ENCODE measurements at regions of chr7 and their contacts with region 1.

Region 1: DNA sequence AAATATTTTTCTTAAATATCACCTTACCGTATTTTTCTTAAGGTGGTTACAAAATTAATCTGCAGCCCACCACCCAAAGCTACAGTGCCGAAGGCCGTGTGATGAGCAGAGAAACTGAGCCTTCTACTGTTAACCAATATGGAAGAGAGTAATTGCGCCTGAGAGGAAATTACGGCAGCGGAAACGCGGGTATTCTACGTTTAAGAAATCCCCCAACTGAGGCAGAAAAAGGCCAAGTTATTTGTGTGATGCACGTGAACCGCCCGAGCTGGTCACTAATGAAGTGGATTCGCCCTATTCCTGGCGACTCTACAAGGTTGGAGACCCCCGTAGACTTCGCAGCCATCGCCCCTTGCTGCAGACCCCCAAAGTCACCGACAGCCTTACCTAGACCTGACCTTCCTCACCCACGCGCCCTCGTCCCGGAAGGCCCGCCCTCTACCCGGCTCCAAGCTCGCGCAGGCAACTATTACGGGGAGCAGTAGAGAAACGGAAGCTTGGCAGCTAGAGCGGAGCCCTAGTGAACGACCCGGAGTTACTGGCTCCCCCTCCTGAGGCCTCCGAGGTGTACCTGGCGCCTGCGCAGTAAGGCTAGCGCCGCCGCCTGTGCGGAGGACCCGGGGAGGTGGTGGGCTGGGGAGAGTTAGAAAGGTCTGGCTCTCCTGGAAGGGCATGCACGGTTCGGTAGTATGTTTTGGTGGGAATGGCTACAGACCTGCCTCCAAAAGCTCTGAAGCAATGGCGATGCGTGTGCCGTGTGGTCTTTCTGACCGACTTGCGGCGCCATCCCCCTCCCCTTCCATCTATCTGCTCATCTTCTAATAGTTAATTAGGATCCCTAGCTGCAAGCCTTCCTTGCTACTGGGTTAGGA is at the start of gene MRPS33:
- DNase-seq: peak; percentile 90 to 98 (median 94)
- ATAC-seq: peak; percentile 95
- H3K4me3 ChIP-seq: peak within 1 kb of the TSS; percentile 73
- H3K4me3 Mint-ChIP-seq: peak within 1 kb of the TSS; percentile 93
- H3K27ac ChIP-seq: peak within 1 kb of the TSS; percentile 100
- H3K27ac Mint-ChIP-seq: peak within 1 kb of the TSS; percentile 100
- H3K4me1 ChIP-seq: peaks cover 18% of the 10 kb centered on the region
- H3K4me1 Mint-ChIP-seq: peaks cover 44% of the 10 kb centered on the region
- H3K27me3 ChIP-seq: peaks cover 0 to 2% of the 10 kb centered on the region in 2 experiments
- H3K27me3 Mint-ChIP-seq: peaks cover 13% of the 10 kb centered on the region
- CTCF ChIP-seq: peak; percentile 61
- total RNA-seq, gene MRPS33: 21.7 to 24.3 TPM

Region 2: DNA sequence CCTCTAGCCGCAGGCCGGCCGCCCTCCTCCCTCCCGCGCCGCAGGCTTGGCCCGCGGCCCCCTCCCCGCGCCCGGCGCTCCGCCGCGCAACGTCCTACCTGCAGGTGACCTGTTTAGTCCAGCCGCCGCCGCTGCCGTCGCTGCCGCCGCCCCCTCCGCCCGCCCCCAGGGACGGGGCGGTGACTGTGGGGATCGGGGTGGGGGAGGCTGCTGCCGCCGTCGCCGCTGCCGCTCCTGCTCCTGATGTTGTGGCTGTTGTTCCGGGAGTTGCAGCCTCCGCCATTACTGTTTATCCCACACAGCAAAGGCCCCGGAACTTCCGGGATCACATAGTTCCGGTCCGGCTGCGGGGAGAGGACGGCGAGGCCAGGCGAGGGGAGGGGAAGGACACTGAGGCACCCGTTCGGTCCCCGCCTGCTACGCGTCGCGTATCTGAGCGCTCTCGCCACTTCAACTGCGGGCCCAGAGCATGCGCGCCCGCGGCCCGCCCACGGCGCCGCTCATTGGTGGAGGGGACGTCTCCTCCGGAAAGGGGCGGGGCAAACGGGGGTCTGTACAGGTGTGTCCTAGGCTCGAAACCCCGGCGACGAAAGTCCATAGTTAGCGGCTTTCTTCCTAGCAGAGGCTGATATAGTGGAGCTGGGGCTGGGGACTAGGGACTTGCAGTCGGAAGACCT is 535.6 kb before region 1 on chr7 and contains the start of gene MKRN1:
- CTCF ChIA-PET with region 1: interaction called, 3 read pairs
- POLR2A ChIA-PET with region 1: interaction called, 33 read pairs
- intact Hi-C with region 1: loop called (anchors 1 to 5 kb)
- DNase-seq: peak; percentile 86 to 96 (median 92)
- ATAC-seq: peak; percentile 86
- H3K4me3 ChIP-seq: peak within 1 kb of the TSS; percentile 91
- H3K4me3 Mint-ChIP-seq: peak within 1 kb of the TSS; percentile 100
- H3K27ac ChIP-seq: peak within 1 kb of the TSS; percentile 73 to 74
- H3K27ac Mint-ChIP-seq: peak within 1 kb of the TSS; percentile 85
- H3K4me1 ChIP-seq: peaks cover 29% of the 10 kb centered on the region
- H3K4me1 Mint-ChIP-seq: peaks cover 29% of the 10 kb centered on the region
- H3K27me3 ChIP-seq: no peaks in the 10 kb centered on the region
- H3K27me3 Mint-ChIP-seq: no peaks in the 10 kb centered on the region
- CTCF ChIP-seq: no peak
- total RNA-seq, gene MKRN1: 115 to 129 TPM

Region 3: DNA sequence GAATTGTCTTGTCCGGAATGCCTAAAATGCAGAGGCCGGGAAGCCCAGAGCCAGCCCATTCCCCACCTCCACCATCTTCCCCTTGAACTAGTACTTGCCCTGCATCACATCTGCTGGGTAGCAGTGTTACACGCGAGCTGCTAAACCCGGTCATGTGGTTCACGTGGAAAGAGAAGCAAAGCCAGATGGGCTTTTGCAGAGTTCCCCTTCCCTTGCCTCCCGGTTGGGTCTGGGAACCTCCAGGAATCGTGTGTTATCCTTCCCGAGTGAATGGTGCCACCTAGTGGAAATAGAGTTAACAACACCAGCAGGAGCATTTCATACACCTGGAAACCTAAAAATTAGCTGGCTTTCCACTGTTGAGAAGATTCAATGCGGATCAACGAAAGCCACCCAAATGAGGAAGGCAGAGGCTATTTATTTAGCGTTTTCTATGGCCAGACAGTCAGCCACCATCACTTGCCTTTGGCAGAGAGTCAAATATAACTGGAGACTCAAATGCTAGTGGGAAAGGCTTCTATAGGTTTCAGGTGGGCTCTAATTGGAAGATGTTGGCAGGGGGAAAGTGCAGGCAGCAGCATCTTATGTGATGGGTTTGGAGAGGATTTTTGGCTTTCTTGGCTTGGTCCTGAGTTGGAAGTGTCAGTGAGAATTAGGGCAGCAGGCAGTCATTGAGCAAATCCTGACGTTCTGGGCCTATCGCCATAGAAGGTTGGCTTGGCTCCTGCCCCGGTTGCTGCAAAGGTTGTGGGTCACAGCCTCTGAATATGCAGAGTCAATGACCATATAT is 361.2 kb before region 1 on chr7:
- CTCF ChIA-PET with region 1: interaction called, 3 read pairs
- POLR2A ChIA-PET with region 1: no interaction called
- intact Hi-C with region 1: loop called in 1 of 2 experiments (anchors 10 kb)
- DNase-seq: peak in 6 of 14 experiments; percentile 15 to 69 (median 47)
- ATAC-seq: no peak
- H3K4me3 ChIP-seq: no peak overlapping the region
- H3K4me3 Mint-ChIP-seq: no peak overlapping the region
- H3K27ac ChIP-seq: no peak overlapping the region
- H3K27ac Mint-ChIP-seq: no peak overlapping the region
- H3K4me1 ChIP-seq: peaks cover 20% of the 10 kb centered on the region
- H3K4me1 Mint-ChIP-seq: peaks cover 18% of the 10 kb centered on the region
- H3K27me3 ChIP-seq: no peaks in the 10 kb centered on the region
- H3K27me3 Mint-ChIP-seq: peaks cover 42% of the 10 kb centered on the region
- CTCF ChIP-seq: peak; percentile 95

Region 4: DNA sequence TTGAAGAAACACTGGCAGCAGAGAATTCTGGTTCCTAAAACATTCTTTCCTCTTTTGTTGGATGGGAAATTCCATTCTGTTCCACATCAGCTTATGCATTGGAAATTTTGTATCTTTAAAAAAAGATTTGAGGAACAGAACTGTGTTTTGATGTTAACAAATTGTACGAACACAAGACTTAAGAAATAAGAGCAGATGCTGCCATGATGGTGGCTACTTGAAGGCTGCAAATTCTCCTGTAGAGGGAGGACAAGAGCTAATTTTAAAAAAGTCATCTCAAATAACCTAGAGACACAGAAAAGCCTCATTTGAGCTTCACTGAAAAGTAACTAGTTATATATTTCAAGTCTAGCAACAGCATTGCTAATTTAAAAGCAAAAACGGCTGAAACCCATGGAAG is 288.5 kb before region 1 on chr7:
- CTCF ChIA-PET with region 1: no interaction called
- POLR2A ChIA-PET with region 1: interaction called, 16 read pairs
- intact Hi-C with region 1: loop called in 1 of 2 experiments (anchors 5 kb)
- DNase-seq: peak in 3 of 14 experiments; percentile 16 to 20 (median 16)
- ATAC-seq: no peak
- H3K4me3 ChIP-seq: no peak overlapping the region
- H3K4me3 Mint-ChIP-seq: no peak overlapping the region
- H3K27ac ChIP-seq: no peak overlapping the region
- H3K27ac Mint-ChIP-seq: peak overlapping the region; percentile 48
- H3K4me1 ChIP-seq: peaks cover 3% of the 10 kb centered on the region
- H3K4me1 Mint-ChIP-seq: peaks cover 19% of the 10 kb centered on the region
- H3K27me3 ChIP-seq: no peaks in the 10 kb centered on the region
- H3K27me3 Mint-ChIP-seq: no peaks in the 10 kb centered on the region
- CTCF ChIP-seq: no peak

Region 5: DNA sequence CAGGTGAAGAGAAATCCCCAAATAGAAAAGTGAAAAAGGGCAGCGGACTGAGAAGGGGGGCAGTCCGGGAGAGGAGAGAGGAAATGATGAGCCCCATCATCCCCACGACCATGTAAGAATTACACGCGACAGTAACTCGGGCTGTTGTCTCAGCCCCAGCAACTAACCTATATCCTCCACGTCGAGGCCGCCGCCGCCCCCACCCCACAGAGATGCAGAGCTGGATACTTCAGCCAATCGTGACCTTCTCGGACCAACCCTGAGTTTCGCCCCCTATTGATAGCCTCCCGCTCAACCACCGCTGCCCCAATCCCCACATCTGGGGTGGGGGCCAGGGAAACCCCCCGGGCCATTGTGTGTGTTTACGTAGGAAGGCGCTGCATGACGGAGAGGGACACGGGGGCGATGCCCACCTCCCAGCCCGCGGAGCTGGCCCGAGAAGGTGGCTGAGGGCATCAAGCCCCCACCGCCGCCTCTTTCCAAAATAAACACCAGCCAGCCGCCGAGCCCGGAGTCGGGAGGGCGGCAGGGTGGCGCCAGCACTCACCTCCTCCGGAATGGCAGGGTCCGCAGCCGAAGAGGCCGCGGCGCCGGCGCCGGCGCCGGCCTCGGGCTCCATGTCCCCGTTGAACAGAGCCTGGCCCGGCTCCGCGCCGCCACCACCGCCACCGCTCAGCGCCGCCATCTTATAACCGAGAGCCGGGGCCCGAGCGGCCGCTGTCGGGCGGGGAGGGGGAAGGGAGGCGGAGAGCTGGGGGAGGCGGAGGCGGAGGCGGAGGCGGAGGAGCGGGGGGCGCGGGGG is 90.5 kb before region 1 on chr7:
- CTCF ChIA-PET with region 1: interaction called, 3 read pairs
- POLR2A ChIA-PET with region 1: interaction called, 15 read pairs
- intact Hi-C with region 1: loop called (anchors 1 to 2 kb)
- DNase-seq: peak; percentile 46 to 94 (median 74)
- ATAC-seq: peak; percentile 61
- H3K4me3 ChIP-seq: peak overlapping the region; percentile 92
- H3K4me3 Mint-ChIP-seq: no peak overlapping the region
- H3K27ac ChIP-seq: peak overlapping the region; percentile 90 to 99
- H3K27ac Mint-ChIP-seq: no peak overlapping the region
- H3K4me1 ChIP-seq: peaks cover 12% of the 10 kb centered on the region
- H3K4me1 Mint-ChIP-seq: peaks cover 28% of the 10 kb centered on the region
- H3K27me3 ChIP-seq: no peaks in the 10 kb centered on the region
- H3K27me3 Mint-ChIP-seq: peaks cover 4% of the 10 kb centered on the region
- CTCF ChIP-seq: peak; percentile 13

Region 6: DNA sequence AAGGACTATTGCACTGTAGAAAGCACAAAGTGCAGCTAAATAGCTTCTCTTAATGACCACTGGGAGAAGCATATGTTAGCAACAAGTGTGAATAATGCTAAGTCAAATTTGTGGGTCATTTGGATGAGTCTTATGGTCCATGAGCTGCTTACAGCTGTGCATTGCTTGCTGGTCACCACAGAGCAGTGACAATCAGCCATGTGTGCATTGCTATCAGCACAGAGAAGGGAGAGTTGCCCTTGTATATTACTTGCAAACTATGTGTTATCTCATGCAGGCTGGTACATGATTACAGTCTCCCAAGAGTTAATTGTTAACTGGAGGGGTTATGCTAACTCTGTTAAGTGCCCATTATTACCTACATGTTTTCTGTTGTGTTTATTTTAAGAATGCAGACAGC is 25.7 kb before region 1 on chr7:
- CTCF ChIA-PET with region 1: no interaction called
- POLR2A ChIA-PET with region 1: no interaction called
- intact Hi-C with region 1: no loop called
- DNase-seq: no peak
- ATAC-seq: no peak
- H3K4me3 ChIP-seq: no peak overlapping the region
- H3K4me3 Mint-ChIP-seq: no peak overlapping the region
- H3K27ac ChIP-seq: no peak overlapping the region
- H3K27ac Mint-ChIP-seq: no peak overlapping the region
- H3K4me1 ChIP-seq: no peaks in the 10 kb centered on the region
- H3K4me1 Mint-ChIP-seq: no peaks in the 10 kb centered on the region
- H3K27me3 ChIP-seq: peaks cover 2 to 3% of the 10 kb centered on the region in 2 experiments
- H3K27me3 Mint-ChIP-seq: no peaks in the 10 kb centered on the region
- CTCF ChIP-seq: no peak

Region 7: DNA sequence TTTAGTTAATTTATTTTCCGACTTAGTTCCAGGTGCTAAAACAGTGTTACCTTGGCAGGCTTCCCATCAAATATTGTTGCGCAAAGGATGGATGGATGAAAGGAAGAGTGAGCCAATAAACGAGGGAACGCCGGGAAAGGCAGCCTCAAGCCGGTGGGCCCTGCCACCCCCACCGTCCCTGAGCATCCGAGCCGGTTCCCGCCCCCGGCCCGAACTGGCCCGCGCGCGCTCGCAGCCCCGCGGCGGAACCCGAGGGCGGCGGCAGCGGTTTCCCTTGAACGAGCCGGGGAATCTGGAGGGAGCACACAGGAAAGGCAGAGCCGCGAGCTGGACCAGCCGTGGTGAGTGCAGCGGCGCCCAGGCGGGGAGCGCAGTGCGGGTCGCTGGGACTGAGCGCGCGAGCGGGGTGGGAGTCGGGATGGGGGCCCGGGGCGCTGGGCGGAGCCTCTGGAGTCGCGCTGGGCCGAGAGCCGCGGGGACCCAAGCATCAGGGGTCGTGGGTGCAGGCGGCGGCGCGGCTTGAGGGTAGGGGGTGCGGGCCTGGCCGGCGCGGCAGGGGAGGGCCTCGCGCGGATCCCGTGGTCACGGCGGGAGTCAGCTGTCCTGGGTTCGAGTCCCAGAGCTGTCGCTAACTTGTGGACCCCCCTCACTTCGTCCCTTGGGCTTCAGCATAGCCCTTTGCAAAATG is 536.5 kb after region 1 on chr7 and contains the start of gene AGK:
- CTCF ChIA-PET with region 1: no interaction called
- POLR2A ChIA-PET with region 1: interaction called, 10 read pairs
- intact Hi-C with region 1: loop called in 1 of 2 experiments (anchors 10 kb)
- DNase-seq: peak; percentile 56 to 84 (median 72)
- ATAC-seq: peak; percentile 97
- H3K4me3 ChIP-seq: peak within 1 kb of the TSS; percentile 62
- H3K4me3 Mint-ChIP-seq: peak within 1 kb of the TSS; percentile 96
- H3K27ac ChIP-seq: no peak within 1 kb of the TSS
- H3K27ac Mint-ChIP-seq: peak within 1 kb of the TSS; percentile 72
- H3K4me1 ChIP-seq: peaks cover 17% of the 10 kb centered on the region
- H3K4me1 Mint-ChIP-seq: peaks cover 33% of the 10 kb centered on the region
- H3K27me3 ChIP-seq: no peaks in the 10 kb centered on the region
- H3K27me3 Mint-ChIP-seq: no peaks in the 10 kb centered on the region
- CTCF ChIP-seq: no peak
- total RNA-seq, gene AGK: 18.9 to 20.5 TPM